CD14-positive monocyte (primary cell): ENCODE measurements at regions of chr11 and their contacts with region 1.

Region 1: GRCh38 chr11:114340311-114341131 is 44.3 kb downstream of the NNMT start:
- DNase-seq: peak; percentile 16 to 51 (median 50)
- H3K4me3 ChIP-seq: peak overlapping the region in 1 of 3 experiments; percentile 54
- H3K4me3 Mint-ChIP-seq: peak overlapping the region; percentile 54 to 83
- H3K27ac ChIP-seq: no peak overlapping the region
- H3K27ac Mint-ChIP-seq: peak overlapping the region in 1 of 7 donors; percentile 58
- H3K4me1 ChIP-seq: peaks cover 9 to 10% of the 10 kb centered on the region in 2 donors
- H3K4me1 Mint-ChIP-seq: peaks cover 14% of the 10 kb centered on the region
- H3K27me3 ChIP-seq: peaks cover 0 to 3% of the 10 kb centered on the region in 2 donors
- H3K27me3 Mint-ChIP-seq: peaks cover 0 to 9% (median 8%) of the 10 kb centered on the region in 3 donors
- CTCF ChIP-seq: peak; percentile 81

Region 2: DNA sequence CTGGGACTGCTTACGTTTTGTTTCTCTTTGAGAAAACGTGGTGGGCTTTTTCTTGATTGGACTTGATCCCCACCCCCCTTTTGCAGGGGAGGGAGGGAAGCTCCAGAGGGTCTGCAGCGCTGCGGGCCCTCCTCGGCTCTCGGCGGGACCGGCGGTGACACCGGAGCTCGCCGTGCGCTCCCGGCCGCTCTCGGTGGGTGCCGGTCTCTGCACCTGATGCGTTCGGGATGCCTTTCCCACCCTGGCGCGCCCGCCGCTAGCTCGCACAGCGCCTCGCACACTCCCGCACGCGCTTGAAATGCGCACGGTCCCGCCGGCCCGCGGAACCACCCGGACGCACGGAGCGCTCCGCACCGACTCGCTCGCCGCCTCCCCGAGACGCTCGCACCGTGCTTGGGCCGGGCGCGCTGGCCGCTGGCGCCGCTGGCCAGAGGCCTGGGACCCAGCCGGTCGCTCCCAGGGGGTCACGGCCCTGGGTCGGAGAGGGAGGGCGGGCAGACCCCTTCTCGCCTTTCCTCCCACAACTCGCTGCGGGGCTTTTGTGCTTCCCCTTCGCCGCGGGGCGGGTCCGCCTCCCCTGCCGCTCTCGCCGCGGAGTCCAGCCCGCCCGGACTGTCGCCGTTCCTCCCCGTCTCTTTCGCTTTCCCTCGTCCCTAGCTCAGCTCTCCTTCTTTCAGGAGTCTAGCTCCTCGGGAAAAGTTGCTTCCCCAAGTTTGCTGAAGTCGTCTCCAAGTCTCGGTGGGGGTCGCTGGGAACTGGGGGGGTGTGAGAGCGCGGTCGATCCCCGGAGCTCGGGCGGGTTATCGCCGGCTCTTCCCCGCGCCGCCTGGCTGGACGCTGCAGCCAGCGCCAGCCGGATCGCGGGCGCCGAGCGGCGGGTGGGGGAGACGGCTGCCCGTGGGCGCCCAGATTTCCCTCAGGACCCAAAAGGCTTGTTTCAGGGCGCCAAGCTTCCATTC is 279.9 kb before region 1 on chr11:
- intact Hi-C with region 1: no loop called
- DNase-seq: peak in 2 of 3 donors; percentile 24 to 32
- H3K4me3 ChIP-seq: peak overlapping the region; percentile 58 to 93 (median 68)
- H3K4me3 Mint-ChIP-seq: peak overlapping the region; percentile 93 to 95
- H3K27ac ChIP-seq: peak overlapping the region in 1 of 2 donors; percentile 26
- H3K27ac Mint-ChIP-seq: peak overlapping the region in 4 of 7 donors; percentile 37 to 68 (median 64)
- H3K4me1 ChIP-seq: peaks cover 18 to 19% of the 10 kb centered on the region in 2 donors
- H3K4me1 Mint-ChIP-seq: peaks cover 22% of the 10 kb centered on the region
- H3K27me3 ChIP-seq: peaks cover 8 to 37% of the 10 kb centered on the region in 2 donors
- H3K27me3 Mint-ChIP-seq: peaks cover 26 to 54% (median 43%) of the 10 kb centered on the region in 3 donors
- CTCF ChIP-seq: no peak

Region 3: DNA sequence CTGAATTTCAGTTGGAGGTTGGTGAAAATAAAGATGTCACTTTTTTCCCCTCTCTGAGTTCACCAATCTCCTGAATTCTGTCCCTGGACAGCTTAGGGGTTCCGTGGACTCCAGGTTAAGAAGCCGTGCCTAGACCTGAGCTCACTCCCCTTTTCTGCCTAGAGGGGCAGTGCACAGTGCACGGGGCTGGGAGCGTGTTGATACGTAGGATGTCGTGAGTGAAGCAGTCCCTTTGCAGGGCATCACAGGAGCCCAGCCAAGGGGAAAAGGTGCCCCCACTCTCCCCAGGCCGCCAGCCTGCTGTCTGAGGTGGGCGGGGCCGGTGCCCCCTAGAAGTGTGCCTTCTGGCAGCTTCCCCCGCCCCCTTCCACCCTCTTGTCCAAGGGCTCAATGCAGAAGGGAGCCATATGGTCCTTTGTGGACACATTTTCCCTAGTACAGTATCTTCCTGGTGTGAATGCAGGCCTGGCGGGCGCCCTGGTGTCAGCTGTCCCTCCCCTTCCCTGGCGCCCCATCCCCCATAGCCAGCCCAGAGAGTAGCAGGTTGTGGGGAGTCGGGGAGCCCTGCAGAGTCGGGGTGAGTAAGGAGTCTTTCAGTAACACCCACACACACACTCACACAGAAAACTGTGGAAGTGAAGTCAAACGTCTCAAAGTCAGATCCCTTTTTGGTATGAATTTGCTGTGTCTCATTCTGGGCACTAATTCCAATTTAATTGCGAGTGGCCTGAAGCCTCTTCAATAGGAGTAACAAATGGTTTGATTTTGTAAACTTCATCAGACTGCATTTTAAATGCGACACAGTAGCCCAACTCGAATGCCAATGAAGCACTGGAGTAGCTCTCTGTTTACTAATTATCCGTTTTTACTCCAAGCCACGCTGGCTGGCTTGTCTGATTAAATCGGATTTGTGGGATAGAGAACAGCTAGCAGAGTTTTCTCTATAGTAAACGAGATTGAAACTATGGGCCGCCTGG is 111.8 kb before region 1 on chr11:
- intact Hi-C with region 1: no loop called
- DNase-seq: no peak
- H3K4me3 ChIP-seq: no peak overlapping the region
- H3K4me3 Mint-ChIP-seq: no peak overlapping the region
- H3K27ac ChIP-seq: no peak overlapping the region
- H3K27ac Mint-ChIP-seq: peak overlapping the region in 2 of 7 donors; percentile 21 to 44
- H3K4me1 ChIP-seq: no peaks in the 10 kb centered on the region
- H3K4me1 Mint-ChIP-seq: peaks cover 5% of the 10 kb centered on the region
- H3K27me3 ChIP-seq: no peaks in the 10 kb centered on the region
- H3K27me3 Mint-ChIP-seq: no peaks in the 10 kb centered on the region
- CTCF ChIP-seq: no peak

Region 4: DNA sequence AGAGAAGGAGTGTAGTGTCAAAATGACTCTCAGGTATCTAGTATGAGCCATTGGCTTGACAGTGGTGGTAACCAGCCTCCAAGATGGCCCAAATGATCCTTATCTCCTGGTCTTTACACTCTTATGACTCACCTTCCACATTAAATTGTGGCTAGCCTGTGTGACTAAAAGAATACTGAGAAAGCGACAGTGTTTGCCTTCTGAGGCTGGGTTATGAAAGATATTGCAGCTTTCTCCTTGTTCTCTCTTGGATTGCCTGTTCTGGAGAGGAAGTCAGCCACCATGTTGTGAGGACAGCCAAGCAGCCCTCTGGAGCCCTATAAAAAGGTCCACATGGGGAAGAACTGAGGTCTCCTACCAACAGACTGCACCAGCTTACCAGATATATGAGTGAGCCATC is 44.0 kb after region 1 on chr11:
- intact Hi-C with region 1: no loop called
- DNase-seq: no peak
- H3K4me3 ChIP-seq: no peak overlapping the region
- H3K4me3 Mint-ChIP-seq: no peak overlapping the region
- H3K27ac ChIP-seq: no peak overlapping the region
- H3K27ac Mint-ChIP-seq: no peak overlapping the region
- H3K4me1 ChIP-seq: no peaks in the 10 kb centered on the region
- H3K4me1 Mint-ChIP-seq: peaks cover 7% of the 10 kb centered on the region
- H3K27me3 ChIP-seq: no peaks in the 10 kb centered on the region
- H3K27me3 Mint-ChIP-seq: peaks cover 1 to 5% (median 2%) of the 10 kb centered on the region in 3 donors
- CTCF ChIP-seq: no peak

Region 5: DNA sequence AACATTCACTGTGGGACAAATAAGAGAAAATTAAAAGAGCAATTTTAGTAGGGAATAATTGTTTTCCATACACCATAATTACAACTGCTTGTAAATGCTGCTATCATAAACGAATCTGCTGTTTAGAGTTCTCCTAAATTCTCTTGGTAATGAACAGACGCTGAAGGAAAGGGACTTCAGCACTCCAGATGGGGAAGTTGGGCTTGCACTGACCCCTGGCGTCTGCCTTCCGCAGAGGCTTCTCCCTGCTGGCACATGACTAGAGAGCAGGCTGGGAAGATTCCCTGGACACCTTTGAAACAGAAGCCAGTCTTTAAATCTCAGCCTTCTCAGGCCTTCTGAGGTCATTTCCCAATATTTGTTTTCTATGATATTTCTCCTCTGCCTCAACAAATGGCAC is 421.9 kb after region 1 on chr11:
- intact Hi-C with region 1: loop called in 1 of 2 experiments (anchors 10 kb)
- DNase-seq: peak in 1 of 3 donors; percentile 1
- H3K4me3 ChIP-seq: no peak overlapping the region
- H3K4me3 Mint-ChIP-seq: no peak overlapping the region
- H3K27ac ChIP-seq: no peak overlapping the region
- H3K27ac Mint-ChIP-seq: no peak overlapping the region
- H3K4me1 ChIP-seq: no peaks in the 10 kb centered on the region
- H3K4me1 Mint-ChIP-seq: no peaks in the 10 kb centered on the region
- H3K27me3 ChIP-seq: no peaks in the 10 kb centered on the region
- H3K27me3 Mint-ChIP-seq: peaks cover 0 to 3% (median 2%) of the 10 kb centered on the region in 3 donors
- CTCF ChIP-seq: peak; percentile 39